Upper lobe of right lung (tissue), 1 donor: ENCODE measurements at regions of chr3 and their contacts with region 1.

Region 1: DNA sequence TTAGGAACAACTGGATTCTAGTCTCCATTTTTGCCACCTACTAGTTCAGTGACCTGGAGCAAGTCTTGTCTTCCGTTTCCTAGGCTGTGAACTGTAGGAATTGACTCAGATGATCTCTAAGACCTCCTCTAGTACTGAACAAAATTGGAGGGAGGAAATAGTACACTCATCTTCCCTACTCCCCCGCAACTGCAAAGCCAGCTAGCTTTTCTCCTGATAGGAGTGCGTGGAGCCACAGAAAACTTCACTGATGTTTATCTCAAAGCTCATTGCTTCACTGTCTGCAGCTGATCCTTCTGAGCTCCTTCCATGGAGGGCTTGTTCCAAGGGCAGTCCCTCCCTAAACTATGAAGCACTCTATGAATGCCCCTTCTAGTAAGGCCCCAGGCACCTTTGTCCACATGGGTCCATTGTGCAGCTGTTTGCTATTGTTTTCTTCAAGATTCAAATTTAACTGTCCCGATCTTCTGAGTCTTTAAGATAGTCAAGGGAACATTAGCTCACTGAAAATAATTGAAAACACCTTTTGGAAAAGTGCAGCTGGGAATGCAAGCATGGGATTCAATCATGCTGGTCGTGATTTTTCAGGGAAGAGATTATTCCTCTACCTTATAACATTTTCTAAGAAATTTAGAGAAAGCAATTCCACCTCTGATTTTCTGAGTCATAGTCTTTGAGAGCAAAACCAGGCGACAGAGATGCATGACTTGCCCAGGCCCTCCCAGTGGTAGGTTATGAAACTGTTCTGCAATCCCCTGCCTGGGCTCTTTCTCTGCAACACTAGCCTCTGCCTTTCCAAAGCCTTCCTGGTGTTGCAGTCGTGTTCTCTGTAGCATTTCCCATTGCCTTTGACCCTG is 24.3 kb downstream of the FILIP1L start:
- DNase-seq: no peak
- ATAC-seq: peak; percentile 79
- H3K4me3 ChIP-seq: no peak overlapping the region
- H3K27ac ChIP-seq: no peak overlapping the region
- H3K4me1 ChIP-seq: peaks cover 17% of the 10 kb centered on the region
- H3K27me3 ChIP-seq: no peaks in the 10 kb centered on the region
- CTCF ChIP-seq: peak; percentile 23

Region 2: GRCh38 chr3:100245927-100246326 is 155.9 kb after region 1 on chr3:
- intact Hi-C with region 1: loop called (anchors 10 kb)
- DNase-seq: no peak
- ATAC-seq: no peak
- H3K4me3 ChIP-seq: no peak overlapping the region
- H3K27ac ChIP-seq: no peak overlapping the region
- H3K4me1 ChIP-seq: no peaks in the 10 kb centered on the region
- H3K27me3 ChIP-seq: no peaks in the 10 kb centered on the region
- CTCF ChIP-seq: no peak